ENCODE measurements at regions of chr5 and their contacts with region 1.

Region 1: GRCh38 chr5:68962757-68963484 is 130.9 kb upstream of the SLC30A5 start:
- DNase-seq: peak; percentile 62 to 80
- ATAC-seq: peak; percentile 86
- H3K4me3 ChIP-seq: no peak overlapping the region
- H3K27ac ChIP-seq: no peak overlapping the region
- H3K4me1 ChIP-seq: no peaks in the 10 kb centered on the region
- H3K27me3 ChIP-seq: no peaks in the 10 kb centered on the region

Region 2: DNA sequence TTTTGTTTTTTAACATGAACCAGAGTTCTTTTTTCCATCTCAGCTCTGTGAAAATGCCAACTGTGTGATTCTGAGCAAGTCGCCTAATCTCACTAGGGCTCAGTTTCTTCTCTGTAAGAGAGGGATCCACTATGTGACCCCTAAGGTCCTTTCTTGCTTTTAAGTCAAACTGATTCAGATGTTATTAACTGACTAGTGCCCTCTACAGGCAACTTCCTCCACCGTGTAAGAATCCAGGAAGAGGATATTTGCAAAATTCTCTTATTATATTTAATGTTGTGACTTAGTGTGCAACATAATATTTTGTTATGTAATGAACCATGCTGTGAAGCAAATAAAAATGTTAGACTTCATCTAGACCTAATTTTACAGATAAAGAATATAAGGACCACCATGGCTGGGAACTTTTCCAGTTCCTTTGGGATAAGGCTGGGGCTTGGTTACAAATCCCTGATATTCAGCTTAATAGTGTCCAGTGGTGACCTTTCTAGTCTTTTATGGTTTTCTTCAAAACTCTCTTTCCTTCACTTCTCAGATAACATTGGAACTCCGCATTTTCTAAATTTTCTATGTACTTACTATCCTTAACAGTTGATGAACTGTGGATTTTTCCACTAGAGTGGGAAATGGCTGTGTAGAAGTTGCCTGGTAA is 502.6 kb before region 1 on chr5:
- intact Hi-C with region 1: loop called in 1 of 2 experiments (anchors 10 kb)
- DNase-seq: no peak
- ATAC-seq: peak; percentile 58
- H3K4me3 ChIP-seq: no peak overlapping the region
- H3K27ac ChIP-seq: no peak overlapping the region
- H3K4me1 ChIP-seq: no peaks in the 10 kb centered on the region
- H3K27me3 ChIP-seq: no peaks in the 10 kb centered on the region